Ovary (tissue), 10 donors: ENCODE measurements at regions of chr7 and their contacts with region 1.

Region 1: GRCh38 chr7:130394421-130395195 is 14.3 kb downstream of the CPA1 start:
- DNase-seq: no peak
- H3K4me3 ChIP-seq: no peak overlapping the region
- H3K27ac ChIP-seq: no peak overlapping the region
- H3K4me1 ChIP-seq: peaks cover 2% of the 10 kb centered on the region
- H3K27me3 ChIP-seq: no peaks in the 10 kb centered on the region
- CTCF ChIP-seq: no peak
- EP300 ChIP-seq: no peak
- POLR2A ChIP-seq: no peak

Region 2: DNA sequence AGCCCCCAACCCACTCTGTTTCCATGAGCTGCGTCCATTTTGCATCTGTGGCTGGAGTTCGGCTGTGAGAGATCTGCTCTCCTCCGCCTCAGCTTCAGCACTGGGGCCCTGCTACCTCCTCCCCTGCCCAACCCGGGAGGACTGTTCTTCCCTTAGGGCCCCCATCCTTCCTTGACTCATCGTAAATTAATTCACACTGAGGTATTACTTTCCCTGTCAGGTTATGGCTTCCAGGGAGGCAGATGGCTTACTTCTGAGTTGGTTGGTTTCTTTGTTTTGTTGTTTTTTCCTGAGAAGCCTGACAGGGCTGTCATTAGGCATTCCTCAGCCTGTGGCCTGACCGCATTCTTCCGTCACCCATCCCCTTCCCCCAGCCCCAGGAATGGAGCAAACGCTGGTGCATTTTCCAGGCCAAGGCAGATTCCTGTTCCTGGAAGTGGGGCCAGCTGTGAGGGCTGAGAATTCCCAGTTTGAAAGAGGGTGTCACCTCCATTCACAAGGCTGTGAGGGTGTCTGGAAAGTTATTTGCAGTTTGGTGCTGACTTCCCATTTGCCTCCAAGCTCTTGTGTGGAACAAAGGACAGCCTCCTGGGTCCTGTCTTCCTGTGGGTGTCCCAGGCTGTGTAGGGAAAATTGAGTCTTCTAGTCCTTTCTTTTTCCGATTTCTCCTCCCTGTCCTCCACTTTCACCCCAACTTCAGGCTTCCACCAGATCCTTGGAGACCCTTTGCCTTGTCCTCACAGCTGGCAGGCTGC is 38.3 kb before region 1 on chr7:
- intact Hi-C with region 1: loop called in 1 of 4 experiments (anchors 5 kb)
- DNase-seq: peak; percentile 41 to 64 (median 51)
- H3K4me3 ChIP-seq: no peak overlapping the region
- H3K27ac ChIP-seq: peak overlapping the region; percentile 25 to 32
- H3K4me1 ChIP-seq: peaks cover 21% of the 10 kb centered on the region
- H3K27me3 ChIP-seq: no peaks in the 10 kb centered on the region
- CTCF ChIP-seq: no peak
- EP300 ChIP-seq: no peak
- POLR2A ChIP-seq: no peak